ENCODE measurements at regions of chr11 and their contacts with region 1.

Region 1: GRCh38 chr11:123282597-123282996 is 87.5 kb upstream of the CLMP start:
- DNase-seq: no peak
- H3K4me3 ChIP-seq: no peak overlapping the region
- H3K27ac ChIP-seq: no peak overlapping the region
- H3K27me3 ChIP-seq: peaks cover 27% of the 10 kb centered on the region
- CTCF ChIP-seq: no peak

Region 2: DNA sequence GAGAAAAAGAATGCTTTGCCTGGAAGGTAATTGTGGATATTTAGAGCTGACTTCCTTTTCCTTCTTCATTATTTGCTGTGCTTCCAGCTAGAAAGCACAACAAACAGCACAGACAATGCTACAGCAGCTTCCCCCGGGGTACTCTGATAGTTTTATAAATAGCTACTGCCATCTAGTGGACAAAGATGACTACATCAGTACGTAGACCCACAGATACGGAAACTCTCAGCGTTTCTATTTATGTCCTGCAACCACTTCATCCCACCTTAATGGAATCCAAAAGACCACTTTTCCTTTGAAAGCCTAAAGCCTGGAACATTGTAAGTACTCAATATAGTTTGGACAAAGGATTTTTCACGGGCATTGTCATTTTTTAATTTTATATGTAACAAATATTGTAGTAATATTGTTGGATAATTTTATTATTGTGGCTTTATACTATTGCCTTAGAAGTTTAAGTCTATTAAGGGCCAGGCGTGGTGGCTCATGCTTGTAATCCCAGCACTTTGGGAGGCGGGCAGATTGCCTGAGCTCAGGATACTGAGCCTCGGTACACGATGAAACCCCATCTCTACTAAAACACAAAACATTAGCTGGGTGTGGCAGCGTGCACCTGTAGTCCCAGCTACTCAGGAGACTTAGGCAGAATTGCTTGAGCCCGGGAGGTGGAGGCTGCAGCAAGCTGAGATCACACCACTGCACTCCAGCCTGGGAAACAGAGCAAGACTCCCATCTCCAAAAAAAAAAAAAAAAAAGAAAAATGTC is 228.1 kb before region 1 on chr11:
- CTCF ChIA-PET with region 1: no interaction called
- POLR2A ChIA-PET with region 1: no interaction called
- DNase-seq: peak; percentile 39
- H3K4me3 ChIP-seq: no peak overlapping the region
- H3K27ac ChIP-seq: no peak overlapping the region
- H3K27me3 ChIP-seq: no peaks in the 10 kb centered on the region
- CTCF ChIP-seq: peak; percentile 74

Region 3: DNA sequence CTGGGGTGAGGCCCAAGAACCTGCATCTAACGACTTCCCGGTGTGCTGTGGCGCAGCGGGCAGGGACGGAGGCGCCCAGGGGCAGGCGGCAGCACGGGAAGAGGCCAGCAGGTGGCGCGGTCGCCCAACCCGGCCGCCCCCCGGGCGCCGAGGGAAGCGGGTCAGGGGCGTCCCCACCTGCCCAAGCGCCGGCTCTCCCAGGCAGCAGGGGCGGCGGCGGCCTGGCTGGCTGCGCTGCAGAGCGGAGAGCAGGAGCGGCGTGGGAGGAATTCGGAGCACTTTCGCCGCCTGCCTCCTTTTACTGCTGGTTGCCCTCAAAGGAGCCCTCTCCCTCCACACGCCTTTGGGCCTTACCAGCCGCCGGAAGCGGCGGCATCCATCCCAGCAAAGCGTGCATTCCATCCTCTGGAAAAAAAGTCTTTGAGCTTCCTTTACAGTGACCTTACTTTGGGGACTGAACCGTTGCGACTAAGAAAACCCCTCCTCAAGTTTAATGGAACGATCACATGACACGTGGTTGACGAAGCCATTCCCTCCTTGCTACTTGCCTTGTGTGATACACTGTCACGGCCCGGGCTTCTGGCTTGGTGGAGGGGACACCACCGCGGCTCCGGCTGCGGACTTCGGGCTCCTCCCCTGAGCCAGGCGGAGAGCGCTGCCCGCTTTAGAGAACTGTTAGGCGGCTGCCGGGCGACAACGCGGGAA is 19.3 kb after region 1 on chr11:
- CTCF ChIA-PET with region 1: interaction called, 14 read pairs
- POLR2A ChIA-PET with region 1: no interaction called
- DNase-seq: no peak
- H3K4me3 ChIP-seq: peak overlapping the region; percentile 50
- H3K27ac ChIP-seq: no peak overlapping the region
- H3K27me3 ChIP-seq: peaks cover 10% of the 10 kb centered on the region
- CTCF ChIP-seq: peak; percentile 64

Measured in AG04450 (cell line).